A549 (cell line): ENCODE measurements at regions of chr3 and their contacts with region 1.

Region 1: DNA sequence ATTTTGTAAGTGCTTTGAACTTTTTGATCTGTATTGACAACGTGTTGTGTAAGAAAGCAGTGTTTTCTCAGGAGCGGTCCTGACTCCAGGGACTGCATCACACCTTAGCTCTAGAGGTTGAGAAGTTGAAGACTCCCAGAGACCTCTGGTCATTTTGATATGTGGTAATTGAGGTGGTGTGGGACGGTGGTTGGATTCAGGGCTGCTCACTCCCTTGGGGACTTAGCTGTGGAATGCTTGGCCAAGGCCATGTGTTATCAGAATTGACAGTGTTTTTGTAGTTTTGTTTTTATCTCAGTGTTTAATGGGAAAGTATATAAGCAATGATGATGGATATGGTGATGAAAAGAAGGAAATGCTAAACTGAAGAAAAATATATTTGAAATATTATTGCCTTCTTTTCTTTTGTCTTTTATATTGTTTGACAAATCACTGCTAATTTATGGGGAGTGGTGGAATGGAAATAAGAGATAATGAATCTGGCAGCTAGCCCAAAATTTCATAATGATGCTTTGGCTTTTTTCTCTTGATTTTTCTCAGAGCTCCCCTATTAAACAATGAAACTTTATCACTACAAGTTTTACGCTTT is 16.0 kb downstream of the CMSS1 start:
- DNase-seq: no peak
- ATAC-seq: no peak
- H3K4me3 ChIP-seq: no peak overlapping the region
- H3K27ac ChIP-seq: no peak overlapping the region
- H3K4me1 ChIP-seq: no peaks in the 10 kb centered on the region
- CTCF ChIP-seq: no peak
- EP300 ChIP-seq: no peak
- POLR2A ChIP-seq: no peak
- RAD21 ChIP-seq: no peak

Region 2: GRCh38 chr3:99872923-99873254 is 39.2 kb after region 1 on chr3:
- CTCF ChIA-PET with region 1: interaction called, 10 read pairs
- POLR2A ChIA-PET with region 1: no interaction called
- DNase-seq: no peak
- ATAC-seq: no peak
- H3K4me3 ChIP-seq: no peak overlapping the region
- H3K27ac ChIP-seq: no peak overlapping the region
- H3K4me1 ChIP-seq: peaks cover 28% of the 10 kb centered on the region
- CTCF ChIP-seq: no peak
- EP300 ChIP-seq: no peak
- POLR2A ChIP-seq: no peak
- RAD21 ChIP-seq: no peak

Region 3: DNA sequence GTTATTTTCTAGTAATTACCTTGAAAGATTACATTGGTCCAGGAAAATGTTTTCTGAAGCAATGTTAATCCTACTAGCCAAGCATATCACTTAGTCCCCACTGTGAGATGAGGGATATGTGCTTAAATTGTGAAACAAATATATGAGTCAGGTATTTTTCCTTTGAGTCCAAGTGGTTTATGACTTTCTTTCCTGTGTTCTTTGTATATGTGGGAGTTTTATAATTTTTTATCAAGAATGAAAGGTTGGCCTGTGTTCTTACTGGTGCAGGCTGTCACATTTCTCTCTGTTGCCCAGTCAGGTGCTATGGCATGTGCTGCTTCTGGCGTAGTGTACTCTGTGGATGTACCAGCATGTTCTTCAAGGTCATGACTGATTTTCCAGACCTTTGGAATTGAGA is 131.4 kb after region 1 on chr3:
- CTCF ChIA-PET with region 1: no interaction called
- POLR2A ChIA-PET with region 1: no interaction called
- DNase-seq: no peak
- ATAC-seq: 0 out of 6 replicates have a peak, but pooled peaks of 1 of the 2 experiments have one; percentile 34
- H3K4me3 ChIP-seq: no peak overlapping the region
- H3K27ac ChIP-seq: no peak overlapping the region
- H3K4me1 ChIP-seq: peaks cover 12% of the 10 kb centered on the region; the same call in 2 of the 3 replicates
- CTCF ChIP-seq: no peak
- EP300 ChIP-seq: no peak
- POLR2A ChIP-seq: no peak
- RAD21 ChIP-seq: no peak

Region 4: DNA sequence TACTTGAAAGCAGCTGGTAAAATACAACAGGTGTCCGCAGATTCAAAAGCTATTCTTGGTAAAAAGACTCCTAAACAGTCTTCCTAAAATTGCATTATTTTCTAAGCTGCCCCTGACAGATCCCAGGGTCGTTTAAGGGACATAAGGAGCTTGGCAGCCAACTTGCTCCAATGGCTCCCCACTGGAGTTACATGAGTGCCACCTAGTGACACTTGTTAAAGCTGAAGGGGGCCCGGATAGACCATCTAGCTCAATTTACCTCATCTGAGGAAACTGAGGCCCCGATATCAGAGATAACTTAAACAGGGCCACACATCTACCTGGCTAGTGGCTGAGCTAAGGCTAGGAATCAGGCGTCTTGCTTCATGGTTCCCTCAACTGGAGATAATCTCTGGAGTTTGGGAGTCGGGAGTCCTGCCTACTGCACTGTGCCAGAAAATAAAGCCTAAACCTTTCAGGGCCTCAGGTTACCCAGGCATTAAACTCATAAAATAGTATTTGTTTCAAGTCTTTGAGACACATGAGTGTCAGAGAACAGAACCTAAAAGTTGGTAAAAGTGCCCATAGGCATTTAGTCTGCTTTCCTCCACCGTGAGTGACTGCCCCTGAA is 420.6 kb after region 1 on chr3:
- CTCF ChIA-PET with region 1: interaction called, 118 read pairs
- POLR2A ChIA-PET with region 1: interaction called, 7 read pairs
- DNase-seq: peak; percentile 42 to 65
- ATAC-seq: peak; percentile 88 to 97
- H3K4me3 ChIP-seq: no peak overlapping the region
- H3K27ac ChIP-seq: no peak overlapping the region
- H3K4me1 ChIP-seq: no peaks in the 10 kb centered on the region
- CTCF ChIP-seq: peak; percentile 88
- EP300 ChIP-seq: no peak
- POLR2A ChIP-seq: no peak
- RAD21 ChIP-seq: peak; percentile 95 to 96

Region 5: GRCh38 chr3:100316641-100317069 is 482.9 kb after region 1 on chr3:
- CTCF ChIA-PET with region 1: interaction called, 13 read pairs
- POLR2A ChIA-PET with region 1: no interaction called
- DNase-seq: peak; percentile 25 to 71
- ATAC-seq: peak; percentile 64 to 90; a peak in 4 of 6 replicates
- H3K4me3 ChIP-seq: no peak overlapping the region
- H3K27ac ChIP-seq: peak overlapping the region in 1 of 2 experiments; percentile 53; a peak in 1 of 6 replicates
- H3K4me1 ChIP-seq: peaks cover 3% of the 10 kb centered on the region; the same call in 1 of the 3 replicates
- CTCF ChIP-seq: peak; percentile 69
- EP300 ChIP-seq: no peak
- POLR2A ChIP-seq: no peak
- RAD21 ChIP-seq: peak; percentile 74 to 79